Upper lobe of right lung (tissue), 1 donor: ENCODE measurements at regions of chr14 and their contacts with region 1.

Region 1: GRCh38 chr14:64823305-64823861 is 56.3 kb downstream of the SPTB start:
- DNase-seq: peak; percentile 91
- ATAC-seq: peak; percentile 93
- H3K4me3 ChIP-seq: no peak overlapping the region
- H3K27ac ChIP-seq: no peak overlapping the region
- H3K4me1 ChIP-seq: peaks cover 3% of the 10 kb centered on the region
- H3K27me3 ChIP-seq: peaks cover 3% of the 10 kb centered on the region
- CTCF ChIP-seq: peak; percentile 81

Region 2: GRCh38 chr14:64704143-64704742 is 119.1 kb before region 1 on chr14 and contains the start of gene PLEKHG3:
- intact Hi-C with region 1: no loop called
- DNase-seq: peak; percentile 89
- ATAC-seq: peak; percentile 74
- H3K4me3 ChIP-seq: peak within 1 kb of the TSS; percentile 70
- H3K27ac ChIP-seq: peak within 1 kb of the TSS; percentile 73
- H3K4me1 ChIP-seq: peaks cover 38% of the 10 kb centered on the region
- H3K27me3 ChIP-seq: no peaks in the 10 kb centered on the region
- CTCF ChIP-seq: no peak
- total RNA-seq, gene PLEKHG3: 34.5 TPM

Region 3: DNA sequence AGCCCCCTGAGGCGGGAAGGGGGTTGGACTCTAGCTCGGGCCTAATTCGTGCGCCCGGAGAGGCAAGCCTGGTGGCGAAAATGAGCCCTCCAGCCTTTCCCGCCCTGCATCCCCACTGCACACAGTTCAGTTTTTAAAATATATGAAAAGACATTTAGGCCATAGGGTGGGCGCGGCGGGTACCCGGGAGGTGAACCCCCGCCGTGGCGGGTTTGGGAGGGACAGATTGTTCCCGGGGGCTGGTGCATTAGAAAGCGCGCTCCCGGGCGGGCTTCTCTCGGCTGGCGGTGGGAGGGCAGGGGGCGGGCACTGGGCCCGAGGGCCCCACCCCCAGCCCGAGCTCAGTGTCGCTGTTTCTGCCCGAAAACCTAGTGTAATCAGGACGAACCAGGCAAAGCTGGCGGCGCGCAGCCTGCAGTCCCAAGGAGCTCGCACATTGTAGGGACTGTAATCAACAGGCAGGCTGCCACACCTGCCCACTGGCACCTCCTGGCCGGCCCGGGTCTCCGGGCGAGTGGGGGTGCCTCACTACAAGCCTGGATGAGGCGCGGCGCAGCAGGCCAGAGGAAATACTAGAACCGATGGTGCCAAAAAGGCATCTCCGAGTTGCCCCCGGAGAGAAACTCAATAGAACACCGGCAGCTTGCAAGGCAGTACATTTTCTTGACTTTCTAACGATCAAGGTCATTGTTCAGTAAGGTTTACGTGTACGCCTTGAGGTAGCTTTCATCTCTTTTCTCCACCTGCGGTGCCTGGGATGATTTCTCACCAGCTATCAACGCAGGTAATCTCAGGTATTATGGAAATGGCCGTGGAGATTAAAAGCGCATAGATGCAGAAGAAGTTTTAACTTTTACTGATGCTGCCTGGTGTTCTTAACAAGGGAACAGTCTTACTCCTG is 57.1 kb after region 1 on chr14:
- intact Hi-C with region 1: loop called (anchors 10 kb)
- DNase-seq: peak; percentile 78
- ATAC-seq: peak; percentile 82
- H3K4me3 ChIP-seq: peak overlapping the region; percentile 60
- H3K27ac ChIP-seq: no peak overlapping the region
- H3K4me1 ChIP-seq: peaks cover 7% of the 10 kb centered on the region
- H3K27me3 ChIP-seq: peaks cover 55% of the 10 kb centered on the region
- CTCF ChIP-seq: no peak